HEK293T (cell line): ENCODE measurements at regions of chrX and their contacts with region 1.

Region 1: DNA sequence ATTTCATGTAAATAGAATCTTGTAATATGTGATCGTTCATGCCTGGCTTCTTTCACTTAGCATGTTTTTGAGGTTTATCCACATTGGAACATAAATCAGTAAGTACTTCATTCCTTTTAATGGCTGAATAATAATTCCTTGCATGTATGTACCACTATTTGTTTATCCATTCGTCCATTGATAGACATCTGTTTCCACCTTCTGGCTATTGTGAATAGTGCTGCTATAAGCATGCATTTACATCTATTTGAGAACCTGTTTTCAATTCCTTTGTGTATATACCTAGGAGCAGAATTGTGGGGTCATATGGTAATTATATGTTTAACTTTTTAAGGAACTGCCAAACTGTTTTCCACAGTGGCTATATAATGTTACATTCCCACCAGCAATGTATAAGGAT is 356.7 kb upstream of the DIPK2B start:
- DNase-seq: no peak

Region 2: DNA sequence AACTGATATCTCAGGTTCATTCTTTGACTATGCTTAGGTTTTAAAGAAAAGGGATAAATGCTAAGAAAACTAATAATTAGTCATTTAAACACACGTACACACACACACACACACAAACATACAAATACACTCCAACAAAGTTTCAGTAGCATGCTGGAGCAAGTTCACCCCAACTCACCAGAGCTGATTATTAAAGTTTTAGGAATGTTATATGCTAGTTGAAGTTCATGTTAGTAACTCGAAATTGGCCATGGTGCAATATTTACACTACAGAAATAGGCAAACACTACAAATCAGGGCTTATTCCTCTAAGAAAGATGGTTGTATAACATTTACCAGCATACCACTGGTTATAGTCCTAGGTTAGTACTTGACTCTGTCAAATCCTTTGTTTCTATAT is 27.3 kb after region 1 on chrX:
- CTCF ChIA-PET with region 1: no interaction called
- POLR2A ChIA-PET with region 1: no interaction called
- DNase-seq: no peak

Region 3: GRCh38 chrX:47351706-47352105 is 1794.3 kb after region 1 on chrX:
- CTCF ChIA-PET with region 1: interaction called, 12 read pairs
- POLR2A ChIA-PET with region 1: no interaction called
- DNase-seq: no peak